Caco-2 (cell line): ENCODE measurements at regions of chr2 and their contacts with region 1.

Region 1: GRCh38 chr2:53422979-53423378 is 344.6 kb upstream of the CHAC2 start:
- DNase-seq: peak in 1 of 2 experiments; percentile 46
- H3K4me3 ChIP-seq: no peak overlapping the region
- H3K4me3 Mint-ChIP-seq: no peak overlapping the region
- H3K27ac Mint-ChIP-seq: no peak overlapping the region
- H3K4me1 ChIP-seq: no peaks in the 10 kb centered on the region
- H3K4me1 Mint-ChIP-seq: no peaks in the 10 kb centered on the region
- H3K27me3 ChIP-seq: no peaks in the 10 kb centered on the region
- H3K27me3 Mint-ChIP-seq: peaks cover 5% of the 10 kb centered on the region
- CTCF ChIP-seq: peak; percentile 41 to 47

Region 2: DNA sequence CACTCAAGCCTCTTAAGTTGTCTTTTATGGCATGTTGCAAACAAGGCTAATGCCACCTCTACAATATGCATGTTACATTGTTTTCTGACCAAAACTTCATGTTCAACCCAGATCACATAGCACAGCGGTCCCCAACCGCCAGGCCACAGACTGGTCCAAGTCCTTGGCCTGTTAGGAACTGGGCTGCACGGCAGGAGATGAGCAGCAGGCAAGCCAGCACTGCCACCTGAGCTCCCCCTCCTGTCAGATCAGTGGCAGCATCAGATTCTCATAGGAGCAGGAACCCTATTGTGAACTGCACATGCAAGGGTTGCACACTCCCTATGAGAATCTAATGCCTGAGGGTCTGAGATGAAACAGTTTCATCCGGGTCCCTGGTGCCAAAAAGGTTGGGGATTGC is 19.8 kb after region 1 on chr2:
- CTCF ChIA-PET with region 1: no interaction called
- POLR2A ChIA-PET with region 1: no interaction called
- intact Hi-C with region 1: loop called (anchors 2 kb)
- DNase-seq: peak in 1 of 2 experiments; percentile 26
- H3K4me3 ChIP-seq: no peak overlapping the region
- H3K4me3 Mint-ChIP-seq: no peak overlapping the region
- H3K27ac Mint-ChIP-seq: no peak overlapping the region
- H3K4me1 ChIP-seq: no peaks in the 10 kb centered on the region
- H3K4me1 Mint-ChIP-seq: no peaks in the 10 kb centered on the region
- H3K27me3 ChIP-seq: no peaks in the 10 kb centered on the region; the same call in 1 of the 2 replicates
- H3K27me3 Mint-ChIP-seq: peaks cover 5% of the 10 kb centered on the region
- CTCF ChIP-seq: peak; percentile 25 to 34

Region 3: DNA sequence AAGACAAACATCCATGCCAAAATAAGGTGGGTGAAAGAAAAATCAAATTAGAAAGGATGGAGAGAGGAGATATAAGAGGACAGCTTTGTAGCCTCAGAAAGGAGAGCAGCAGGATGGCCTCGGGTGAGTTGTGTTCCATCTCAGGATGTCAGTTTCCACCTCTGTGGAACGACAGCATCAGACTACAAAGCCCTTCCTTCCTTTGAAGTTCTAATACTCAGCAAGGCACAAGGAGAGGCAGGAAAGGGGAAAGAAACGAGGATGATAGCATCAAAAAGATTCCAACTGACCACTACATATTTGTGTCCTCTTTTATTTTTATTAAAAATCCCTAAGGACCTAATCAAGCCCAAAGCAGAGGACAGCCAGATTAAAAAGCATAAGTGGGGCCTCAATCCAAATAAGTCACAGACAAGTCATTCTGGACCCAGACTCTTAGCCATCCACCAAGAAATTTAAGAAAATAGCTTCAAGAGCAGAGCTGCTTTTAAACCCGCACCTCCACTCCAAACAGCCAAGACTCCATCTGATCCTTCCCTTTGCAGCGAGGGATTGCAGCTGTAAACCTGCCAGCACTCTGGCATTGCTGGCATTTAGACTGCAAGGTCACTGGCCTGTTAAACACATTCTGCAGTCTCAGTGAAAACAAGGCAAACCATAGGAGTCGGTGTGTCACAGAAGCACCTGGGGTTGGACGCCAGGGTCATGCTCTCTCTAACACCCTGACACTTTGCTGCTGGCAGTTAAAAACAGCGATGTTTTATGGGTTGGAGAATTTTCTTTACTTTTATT is 30.2 kb after region 1 on chr2:
- CTCF ChIA-PET with region 1: no interaction called
- POLR2A ChIA-PET with region 1: no interaction called
- intact Hi-C with region 1: no loop called
- DNase-seq: no peak
- H3K4me3 ChIP-seq: no peak overlapping the region
- H3K4me3 Mint-ChIP-seq: no peak overlapping the region
- H3K27ac Mint-ChIP-seq: no peak overlapping the region
- H3K4me1 ChIP-seq: no peaks in the 10 kb centered on the region
- H3K4me1 Mint-ChIP-seq: peaks cover 7% of the 10 kb centered on the region
- H3K27me3 ChIP-seq: no peaks in the 10 kb centered on the region
- H3K27me3 Mint-ChIP-seq: peaks cover 8% of the 10 kb centered on the region
- CTCF ChIP-seq: no peak

Region 4: GRCh38 chr2:53473248-53473647 is 50.3 kb after region 1 on chr2:
- CTCF ChIA-PET with region 1: interaction called, 4 read pairs
- POLR2A ChIA-PET with region 1: no interaction called
- intact Hi-C with region 1: loop called (anchors 1 kb)
- DNase-seq: no peak
- H3K4me3 ChIP-seq: no peak overlapping the region
- H3K4me3 Mint-ChIP-seq: no peak overlapping the region
- H3K27ac Mint-ChIP-seq: no peak overlapping the region
- H3K4me1 ChIP-seq: no peaks in the 10 kb centered on the region
- H3K4me1 Mint-ChIP-seq: no peaks in the 10 kb centered on the region
- H3K27me3 ChIP-seq: no peaks in the 10 kb centered on the region
- H3K27me3 Mint-ChIP-seq: peaks cover 11% of the 10 kb centered on the region
- CTCF ChIP-seq: peak in 1 of 2 experiments; percentile 28

Region 5: DNA sequence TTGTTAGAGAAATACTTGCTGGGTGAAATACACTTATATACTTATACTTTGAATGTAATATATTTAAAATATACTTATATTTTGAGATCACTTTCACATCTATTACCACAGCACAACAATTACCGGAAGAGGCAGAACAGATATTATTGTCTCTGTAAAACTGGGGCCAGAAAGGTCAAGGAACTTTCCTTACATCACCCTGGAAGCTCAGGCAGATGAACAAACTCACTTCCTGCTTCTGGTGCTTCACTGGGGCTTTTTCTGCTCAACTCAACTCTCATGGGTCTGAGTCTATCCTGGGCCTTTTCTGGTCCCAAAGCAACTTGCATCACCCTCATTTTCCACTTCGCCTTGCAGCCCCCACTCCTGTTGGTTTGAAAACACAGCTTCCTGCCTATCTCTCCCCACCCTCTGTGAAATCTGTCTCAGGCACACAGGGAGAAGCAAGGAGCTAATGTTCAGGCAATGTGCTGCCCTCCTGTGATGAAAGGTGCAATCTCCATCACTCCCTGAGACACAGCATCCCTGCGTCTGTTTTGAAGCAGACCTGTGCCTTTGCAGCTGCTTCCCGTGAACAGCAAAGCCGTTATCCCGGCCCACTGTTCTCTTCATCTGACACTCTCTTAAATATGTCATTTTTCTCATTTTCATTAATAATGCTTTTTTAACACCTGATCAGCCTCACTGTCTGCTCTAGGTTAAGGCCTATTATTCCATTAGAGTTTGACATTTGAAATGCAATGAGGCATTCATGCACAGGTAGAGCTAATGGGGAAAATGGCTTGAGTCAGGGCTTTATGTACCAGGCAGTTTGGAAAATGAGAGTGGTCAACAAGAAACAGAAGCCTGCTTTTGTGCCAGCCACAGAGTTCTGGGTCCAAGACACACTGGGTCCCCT is 92.7 kb after region 1 on chr2:
- CTCF ChIA-PET with region 1: no interaction called
- POLR2A ChIA-PET with region 1: no interaction called
- intact Hi-C with region 1: loop called (anchors 5 kb)
- DNase-seq: no peak
- H3K4me3 ChIP-seq: no peak overlapping the region
- H3K4me3 Mint-ChIP-seq: no peak overlapping the region
- H3K27ac Mint-ChIP-seq: no peak overlapping the region
- H3K4me1 ChIP-seq: no peaks in the 10 kb centered on the region
- H3K4me1 Mint-ChIP-seq: no peaks in the 10 kb centered on the region
- H3K27me3 ChIP-seq: no peaks in the 10 kb centered on the region
- H3K27me3 Mint-ChIP-seq: peaks cover 4% of the 10 kb centered on the region
- CTCF ChIP-seq: no peak

Region 6: DNA sequence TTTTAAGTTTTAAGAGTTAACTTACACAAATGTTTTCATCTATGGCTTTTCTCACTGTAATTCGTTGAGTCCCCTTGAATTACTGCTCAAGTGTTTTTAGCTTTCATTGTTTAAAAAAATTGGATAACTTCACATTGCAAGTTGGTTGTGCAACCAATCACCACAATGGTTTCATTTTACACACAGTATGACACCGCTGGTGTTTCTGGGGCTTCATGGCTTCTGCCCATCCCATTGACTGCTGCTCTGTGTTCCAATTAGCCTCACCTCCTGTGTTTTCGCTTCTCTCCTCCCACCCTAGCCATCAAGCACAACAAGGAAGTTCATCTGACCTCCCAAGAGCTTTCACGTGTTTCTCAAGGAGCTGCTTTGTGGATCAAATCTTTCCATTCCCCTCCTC is 145.5 kb after region 1 on chr2:
- CTCF ChIA-PET with region 1: no interaction called
- POLR2A ChIA-PET with region 1: no interaction called
- intact Hi-C with region 1: loop called (anchors 5 kb)
- DNase-seq: no peak
- H3K4me3 ChIP-seq: no peak overlapping the region
- H3K4me3 Mint-ChIP-seq: no peak overlapping the region
- H3K27ac Mint-ChIP-seq: no peak overlapping the region
- H3K4me1 ChIP-seq: no peaks in the 10 kb centered on the region
- H3K4me1 Mint-ChIP-seq: no peaks in the 10 kb centered on the region
- H3K27me3 ChIP-seq: no peaks in the 10 kb centered on the region
- H3K27me3 Mint-ChIP-seq: peaks cover 9% of the 10 kb centered on the region
- CTCF ChIP-seq: no peak

Region 7: DNA sequence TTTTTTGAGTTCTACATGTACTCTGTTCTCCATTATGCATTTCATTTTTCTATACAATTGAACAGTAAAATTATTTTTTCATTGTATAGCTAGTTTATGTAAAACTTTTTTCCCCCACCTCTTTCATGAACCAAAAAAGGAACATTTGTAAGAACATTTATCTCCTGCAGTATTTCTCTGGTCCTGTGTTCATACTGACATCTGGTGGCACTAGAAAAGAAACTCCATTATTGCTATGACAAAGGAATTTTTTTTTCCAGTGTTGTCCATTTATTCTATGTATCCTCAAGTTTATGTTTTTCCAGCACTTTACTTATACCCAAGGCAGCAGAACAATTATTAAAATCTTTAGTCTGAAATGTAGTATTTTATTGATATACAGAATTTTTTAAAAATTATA is 317.2 kb after region 1 on chr2:
- CTCF ChIA-PET with region 1: no interaction called
- POLR2A ChIA-PET with region 1: no interaction called
- intact Hi-C with region 1: loop called (anchors 1 kb)
- DNase-seq: peak in 1 of 2 experiments; percentile 7
- H3K4me3 ChIP-seq: no peak overlapping the region
- H3K4me3 Mint-ChIP-seq: no peak overlapping the region
- H3K27ac Mint-ChIP-seq: no peak overlapping the region
- H3K4me1 ChIP-seq: no peaks in the 10 kb centered on the region
- H3K4me1 Mint-ChIP-seq: no peaks in the 10 kb centered on the region
- H3K27me3 ChIP-seq: no peaks in the 10 kb centered on the region
- H3K27me3 Mint-ChIP-seq: no peaks in the 10 kb centered on the region
- CTCF ChIP-seq: peak; percentile 23 to 58

Region 8: DNA sequence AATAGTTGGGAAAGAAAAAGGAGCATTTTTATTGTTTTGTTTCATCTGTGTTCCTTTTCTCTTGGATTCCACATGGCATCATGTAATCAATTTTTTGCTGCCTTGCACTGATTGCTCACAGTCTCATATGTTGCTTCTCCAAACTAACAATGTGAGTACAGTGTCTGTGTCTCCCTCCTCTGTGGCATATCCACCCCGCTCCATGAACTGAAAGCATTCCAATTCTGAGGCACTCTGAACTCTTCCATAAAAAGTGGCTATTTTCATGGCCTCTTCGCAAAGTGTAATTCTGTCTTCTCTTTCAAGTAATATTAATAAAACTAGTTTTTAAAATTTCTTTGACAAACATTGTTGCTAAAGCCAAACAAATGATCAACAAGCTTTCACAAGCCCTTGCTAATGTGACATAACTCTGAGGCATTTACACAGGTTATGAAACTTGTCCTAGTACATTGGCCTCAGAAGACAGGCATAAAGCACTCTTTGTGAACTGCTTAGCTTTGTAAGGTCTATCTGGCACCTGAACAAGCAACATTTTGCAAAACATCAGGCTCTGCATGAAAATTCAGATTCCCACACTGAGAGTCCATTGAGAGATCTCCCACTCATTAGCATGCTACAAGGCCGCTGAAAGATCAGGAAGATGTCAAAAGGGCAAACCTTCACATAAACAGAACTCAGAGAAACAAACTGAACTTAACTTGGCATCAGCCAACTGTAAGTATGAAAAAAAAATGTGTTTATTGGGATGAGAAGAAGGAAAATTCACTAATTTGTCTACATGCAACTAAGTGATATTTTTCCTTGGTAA is 403.8 kb after region 1 on chr2:
- CTCF ChIA-PET with region 1: no interaction called
- POLR2A ChIA-PET with region 1: no interaction called
- intact Hi-C with region 1: loop called (anchors 10 kb)
- DNase-seq: peak in 1 of 2 experiments; percentile 14
- H3K4me3 ChIP-seq: no peak overlapping the region
- H3K4me3 Mint-ChIP-seq: no peak overlapping the region
- H3K27ac Mint-ChIP-seq: no peak overlapping the region
- H3K4me1 ChIP-seq: no peaks in the 10 kb centered on the region
- H3K4me1 Mint-ChIP-seq: no peaks in the 10 kb centered on the region
- H3K27me3 ChIP-seq: no peaks in the 10 kb centered on the region
- H3K27me3 Mint-ChIP-seq: no peaks in the 10 kb centered on the region
- CTCF ChIP-seq: no peak